ENCODE measurements at regions of chr1 and their contacts with region 1.

Region 1: DNA sequence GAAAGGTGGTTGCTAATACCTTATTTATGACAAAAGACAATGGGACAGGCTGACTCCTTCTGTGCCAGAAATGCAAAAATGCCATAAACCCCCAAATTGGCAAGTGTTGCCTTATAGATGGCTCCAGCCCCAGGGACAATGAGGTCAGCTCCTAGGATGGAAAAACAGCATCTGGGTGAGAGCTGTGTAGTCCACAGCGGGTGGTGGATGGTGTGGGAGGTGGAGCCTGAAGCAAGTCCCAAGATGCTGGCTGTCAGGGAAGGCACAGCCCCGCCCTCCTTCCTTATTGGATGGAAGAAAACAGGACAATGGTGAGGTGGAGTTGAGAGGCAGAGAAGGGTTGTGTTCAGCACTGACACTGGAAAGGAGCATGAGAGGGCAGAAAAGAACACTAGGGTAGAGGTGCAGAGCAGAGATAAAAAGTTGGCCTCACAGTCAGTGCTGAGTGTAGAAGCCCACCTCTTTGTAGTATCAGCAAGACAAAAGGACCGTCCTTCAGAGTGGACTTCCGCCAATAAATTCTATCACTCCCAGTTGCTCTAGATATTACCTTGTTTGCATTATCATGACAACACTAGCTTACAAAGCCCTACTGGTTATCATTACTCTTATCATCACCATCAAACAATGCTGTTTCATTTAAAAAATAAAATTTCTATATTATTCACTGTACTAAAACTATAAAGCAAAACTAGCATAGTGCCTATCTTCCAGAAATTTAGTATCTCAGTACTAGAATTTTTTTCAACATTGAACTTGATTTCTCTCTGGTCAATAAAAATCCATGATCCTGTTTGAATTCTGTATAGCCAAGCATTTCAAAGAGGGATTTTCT is 3.7 kb upstream of the SDE2 start:
- DNase-seq: no peak
- H3K4me3 ChIP-seq: no peak overlapping the region
- H3K27me3 ChIP-seq: no peaks in the 10 kb centered on the region
- CTCF ChIP-seq: no peak

Region 2: GRCh38 chr1:225987491-225988316 is 15.2 kb before region 1 on chr1:
- CTCF ChIA-PET with region 1: interaction called, 30 read pairs
- POLR2A ChIA-PET with region 1: interaction called, 17 read pairs
- DNase-seq: no peak
- H3K4me3 ChIP-seq: no peak overlapping the region
- H3K27me3 ChIP-seq: no peaks in the 10 kb centered on the region
- CTCF ChIP-seq: peak; percentile 68

Measured in BJ (cell line).